ENCODE measurements at regions of chr18 and their contacts with region 1.

Region 1: DNA sequence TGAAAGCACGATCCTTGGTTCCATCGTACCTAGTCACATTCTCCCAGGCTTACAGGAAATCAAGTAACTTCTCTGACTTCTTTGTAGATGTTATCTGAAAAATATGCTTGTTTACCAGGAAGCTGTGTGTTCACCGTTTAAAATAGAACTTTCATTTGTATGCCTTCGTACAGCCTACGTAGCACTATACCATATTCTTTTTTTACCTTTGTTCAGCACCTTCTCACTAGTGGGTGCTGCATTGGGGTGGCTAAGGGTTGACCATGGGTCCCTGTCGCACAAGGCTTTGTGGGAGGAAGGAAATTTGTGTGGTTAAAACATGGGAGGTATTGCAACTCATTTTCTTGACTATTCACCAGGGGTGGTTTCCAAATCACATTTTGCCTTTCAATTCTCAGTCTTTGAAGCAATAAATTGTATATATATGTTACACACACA is 16.6 kb downstream of the MALT1 start:
- DNase-seq: peak; percentile 62
- CTCF ChIP-seq: no peak

Region 2: GRCh38 chr18:58344861-58345463 is 342.9 kb before region 1 on chr18:
- CTCF ChIA-PET with region 1: no interaction called
- POLR2A ChIA-PET with region 1: no interaction called
- DNase-seq: no peak
- CTCF ChIP-seq: no peak

Region 3: DNA sequence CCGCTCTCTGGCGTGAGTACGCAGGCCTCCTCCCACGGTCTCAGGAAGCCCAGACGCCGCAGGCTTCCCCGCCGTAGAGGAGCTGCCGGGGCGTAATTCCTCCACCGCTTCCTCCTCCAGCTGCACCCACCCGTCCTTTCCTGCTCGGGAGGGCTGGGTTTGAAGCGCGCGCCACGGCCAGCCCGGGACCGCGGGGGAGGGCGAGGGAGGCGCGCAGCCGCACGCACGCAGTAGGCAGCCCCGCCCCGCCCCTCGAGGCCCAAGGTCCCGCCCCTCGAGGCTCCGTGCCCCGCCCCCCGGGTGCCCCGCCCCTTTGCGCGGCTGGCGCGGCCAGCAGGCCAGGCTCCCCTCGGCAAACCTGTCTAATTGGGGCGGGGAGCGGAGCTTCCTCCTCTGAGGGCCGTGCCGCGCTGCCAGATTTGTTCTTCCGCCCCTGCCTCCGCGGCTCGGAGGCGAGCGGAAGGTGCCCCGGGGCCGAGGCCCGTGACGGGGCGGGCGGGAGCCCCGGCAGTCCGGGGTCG is 16.7 kb before region 1 on chr18 and contains the start of gene MALT1:
- CTCF ChIA-PET with region 1: interaction called, 11 read pairs
- POLR2A ChIA-PET with region 1: interaction called, 4 read pairs
- DNase-seq: peak; percentile 95
- CTCF ChIP-seq: no peak

Region 4: GRCh38 chr18:58699551-58699950 is 11.7 kb after region 1 on chr18:
- CTCF ChIA-PET with region 1: interaction called, 10 read pairs
- POLR2A ChIA-PET with region 1: no interaction called
- DNase-seq: no peak
- CTCF ChIP-seq: no peak

Region 5: GRCh38 chr18:58831606-58832005 is 143.7 kb after region 1 on chr18:
- CTCF ChIA-PET with region 1: no interaction called
- POLR2A ChIA-PET with region 1: no interaction called
- DNase-seq: no peak
- CTCF ChIP-seq: no peak